Posterior cingulate gyrus (tissue), 11 donors: ENCODE measurements at regions of chr22 and their contacts with region 1.

Region 1: DNA sequence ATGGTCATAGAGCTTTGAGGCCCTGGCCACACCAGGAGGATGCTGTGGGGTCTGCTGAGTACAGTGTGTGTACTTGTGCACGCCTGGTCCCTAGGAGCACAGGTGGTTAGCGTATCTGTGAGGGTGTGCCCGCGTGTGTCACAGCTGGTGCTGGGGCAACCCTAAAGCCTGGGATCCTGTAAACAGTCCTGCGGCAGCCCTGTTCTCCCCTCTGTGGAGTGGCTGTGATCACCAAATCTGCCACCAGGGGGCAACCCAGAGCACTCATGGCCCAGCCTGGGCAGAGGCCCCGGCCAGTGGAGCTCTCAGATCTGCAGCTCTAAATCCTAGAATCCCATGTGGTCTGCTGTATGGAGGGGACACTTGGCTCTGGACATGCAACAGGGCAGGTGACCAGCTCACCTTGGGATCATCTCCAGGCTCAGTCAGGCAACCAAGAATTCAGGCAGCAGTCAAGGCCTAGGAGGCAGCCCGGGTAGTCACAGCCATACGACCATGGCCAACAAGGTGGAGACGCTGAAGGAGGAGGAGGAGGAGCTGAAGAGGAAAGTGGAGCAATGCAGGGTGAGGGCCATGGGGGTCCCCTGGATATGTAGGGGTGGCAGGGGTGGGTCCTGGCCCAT is 3.9 kb downstream of the SH3BP1 start:
- DNase-seq: peak; percentile 74 to 98 (median 92)

Region 2: DNA sequence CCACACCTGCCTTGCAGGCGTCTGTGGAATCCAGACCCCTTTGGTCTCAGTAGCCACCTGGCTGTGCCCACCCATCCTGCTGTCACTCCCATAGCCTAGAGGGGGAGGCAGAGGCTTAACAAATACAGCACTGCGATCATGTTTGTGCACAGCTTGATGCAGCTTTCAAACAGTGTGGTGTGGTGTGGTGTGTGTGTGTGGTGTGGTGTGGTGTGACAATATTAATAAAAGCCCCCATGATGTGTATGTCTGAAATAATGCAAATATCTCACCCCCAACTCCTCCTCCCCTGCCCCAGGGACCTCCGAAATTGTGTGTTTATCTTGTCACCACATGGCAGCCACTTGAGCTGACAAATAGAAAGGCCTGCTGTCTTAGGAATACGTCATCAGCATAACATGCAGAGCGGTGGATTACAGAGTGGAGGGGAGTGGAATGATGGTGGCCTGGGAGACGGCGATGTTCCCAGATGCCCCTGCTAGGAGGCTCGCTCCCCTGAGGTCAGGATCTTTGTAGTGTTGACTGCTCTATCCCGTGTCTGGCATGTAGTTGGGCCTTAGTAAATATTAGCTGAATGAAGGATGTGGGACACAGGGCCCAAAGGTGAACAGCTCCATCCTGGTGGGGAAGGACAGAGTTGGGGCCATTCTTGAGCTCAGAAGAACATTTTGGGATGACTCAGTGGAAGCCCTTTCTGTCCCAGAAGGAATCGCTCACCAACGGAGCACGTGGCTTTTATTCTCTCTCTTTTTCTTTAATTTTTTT is 18.0 kb after region 1 on chr22:
- intact Hi-C with region 1: no loop called
- DNase-seq: peak in 2 of 10 donors; percentile 37 to 42

Region 3: GRCh38 chr22:37686002-37686982 is 43.0 kb after region 1 on chr22 and contains the start of gene NOL12:
- intact Hi-C with region 1: loop called (anchors 5 kb)
- DNase-seq: peak; percentile 74 to 97 (median 80)

Region 4: DNA sequence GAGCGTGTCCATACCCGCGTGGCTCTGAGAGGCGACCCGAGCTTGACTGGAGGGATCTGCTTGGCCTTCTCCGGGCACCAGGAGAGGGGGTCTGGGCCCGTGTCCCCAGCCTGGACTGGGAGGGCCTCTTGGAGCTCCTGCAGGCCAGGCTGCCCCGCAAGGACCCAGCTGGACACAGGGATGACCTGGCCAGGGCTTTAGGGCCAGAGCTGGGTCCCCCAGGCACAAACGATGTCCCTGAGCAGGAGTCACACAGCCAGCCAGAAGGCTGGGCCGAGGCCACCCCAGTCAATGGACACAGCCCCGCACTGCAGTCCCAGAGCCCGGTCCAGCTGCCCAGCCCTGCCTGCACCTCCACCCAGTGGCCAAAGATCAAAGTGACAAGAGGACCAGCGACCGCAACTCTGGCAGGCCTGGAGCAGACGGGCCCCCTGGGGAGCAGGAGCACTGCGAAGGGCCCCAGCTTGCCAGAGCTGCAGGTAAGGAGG is 91.7 kb after region 1 on chr22:
- intact Hi-C with region 1: loop called (anchors 10 kb)
- DNase-seq: peak in 6 of 10 donors; percentile 24 to 93 (median 36)

Region 5: GRCh38 chr22:38069372-38070249 is 426.3 kb after region 1 on chr22:
- intact Hi-C with region 1: no loop called
- DNase-seq: peak; percentile 66 to 98 (median 85)